Activated naive CD8-positive, alpha-beta T cell treated with anti-CD3 and anti-CD28 coated beads, Interleukin-2, amount 10 ng/mL, durations not matched to agents 7 days and 5 days (primary cell): ENCODE measurements at regions of chr6 and their contacts with region 1.

Region 1: GRCh38 chr6:116680975-116681808 is at the start of gene KPNA5:
- DNase-seq: peak; percentile 90
- ATAC-seq: peak; percentile 96
- H3K4me3 Mint-ChIP-seq: peak within 1 kb of the TSS; percentile 97
- H3K27ac Mint-ChIP-seq: peak within 1 kb of the TSS; percentile 99
- H3K4me1 Mint-ChIP-seq: peaks cover 16% of the 10 kb centered on the region
- H3K27me3 Mint-ChIP-seq: no peaks in the 10 kb centered on the region
- total RNA-seq, gene KPNA5: 29.5 to 35.0 TPM

Region 2: DNA sequence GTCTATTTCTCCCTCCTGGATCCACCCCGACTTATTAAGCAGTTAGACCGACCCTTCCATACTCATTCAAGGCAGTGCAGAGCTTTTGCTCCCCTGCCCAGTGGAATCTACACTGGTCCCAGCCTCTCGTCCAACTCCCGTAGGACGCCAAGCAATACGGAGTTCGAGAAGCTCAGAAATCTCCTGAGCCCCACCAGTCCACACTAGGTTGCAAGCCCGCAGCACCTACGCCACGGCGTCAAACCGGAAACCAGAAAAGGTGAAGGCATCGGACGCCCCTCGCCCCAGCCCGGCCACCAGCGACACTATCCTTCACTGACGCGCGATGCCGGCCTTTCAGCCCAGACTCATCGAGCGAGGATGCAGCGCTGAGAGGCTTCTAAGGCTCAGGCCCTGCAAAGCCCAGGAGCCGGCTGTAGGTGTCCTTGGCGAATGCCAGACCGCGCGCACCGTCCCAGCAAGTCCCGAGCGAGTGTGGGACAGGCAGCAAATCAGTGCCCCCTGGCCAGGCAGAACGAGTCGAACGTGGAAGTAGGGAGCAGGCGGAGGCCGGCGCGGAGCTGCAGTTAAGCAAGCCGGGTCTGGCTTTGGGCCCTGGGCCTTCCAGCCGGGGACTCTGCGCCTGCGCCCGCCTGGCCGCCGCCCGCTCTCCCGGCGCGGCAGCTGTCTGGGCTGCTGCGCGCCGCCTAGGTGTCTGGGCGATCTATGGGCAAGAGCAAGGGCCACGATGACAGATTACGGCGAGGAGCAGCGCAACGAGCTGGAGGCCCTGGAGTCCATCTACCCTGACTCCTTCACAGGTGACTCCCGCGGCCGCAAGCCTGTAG is 110.1 kb before region 1 on chr6 and contains the start of gene RWDD1:
- POLR2A ChIA-PET with region 1: interaction called, 14 read pairs
- DNase-seq: peak; percentile 95
- ATAC-seq: peak; percentile 93
- H3K4me3 Mint-ChIP-seq: peak within 1 kb of the TSS; percentile 97
- H3K27ac Mint-ChIP-seq: peak within 1 kb of the TSS; percentile 98
- H3K4me1 Mint-ChIP-seq: peaks cover 27% of the 10 kb centered on the region
- H3K27me3 Mint-ChIP-seq: no peaks in the 10 kb centered on the region
- total RNA-seq, gene RWDD1: 33.2 to 36.6 TPM

Region 3: DNA sequence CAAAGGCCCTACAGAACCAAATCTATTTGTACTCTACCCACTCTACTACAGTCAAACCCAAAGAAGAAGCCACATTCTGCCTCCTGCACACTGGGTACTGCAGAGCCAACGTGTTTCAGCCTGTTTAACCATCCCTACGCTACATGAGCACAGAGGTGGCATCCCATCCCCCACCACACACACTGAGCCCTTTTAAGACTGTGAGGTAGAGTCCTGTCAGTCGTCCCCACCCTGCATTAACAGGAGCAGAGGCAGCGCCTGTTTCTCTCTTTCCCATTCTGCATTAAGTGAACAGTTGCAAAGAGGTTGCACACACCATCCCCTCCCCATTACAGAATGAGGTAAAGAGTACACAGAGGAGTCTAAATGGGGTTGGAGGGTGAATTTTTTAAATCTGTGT is 70.1 kb before region 1 on chr6:
- POLR2A ChIA-PET with region 1: no interaction called
- DNase-seq: no peak
- ATAC-seq: no peak
- H3K4me3 Mint-ChIP-seq: no peak overlapping the region
- H3K27ac Mint-ChIP-seq: no peak overlapping the region
- H3K4me1 Mint-ChIP-seq: peaks cover 3% of the 10 kb centered on the region
- H3K27me3 Mint-ChIP-seq: peaks cover 26% of the 10 kb centered on the region

Region 4: GRCh38 chr6:116649129-116649528 is 32.1 kb before region 1 on chr6:
- POLR2A ChIA-PET with region 1: no interaction called
- DNase-seq: no peak
- ATAC-seq: no peak
- H3K4me3 Mint-ChIP-seq: no peak overlapping the region
- H3K27ac Mint-ChIP-seq: no peak overlapping the region
- H3K4me1 Mint-ChIP-seq: peaks cover 7% of the 10 kb centered on the region
- H3K27me3 Mint-ChIP-seq: no peaks in the 10 kb centered on the region